Activated CD8-positive, alpha-beta T cell treated with anti-CD3 and anti-CD28 coated beads for 36 hours (primary cell): ENCODE measurements at regions of chr11 and their contacts with region 1.

Region 1: GRCh38 chr11:78139422-78140391 is at the start of gene ALG8:
- DNase-seq: peak; percentile 97
- ATAC-seq: peak; percentile 96
- H3K4me3 Mint-ChIP-seq: peak within 1 kb of the TSS; percentile 96
- H3K27ac Mint-ChIP-seq: peak within 1 kb of the TSS; percentile 92
- H3K4me1 Mint-ChIP-seq: peaks cover 37% of the 10 kb centered on the region
- H3K27me3 Mint-ChIP-seq: no peaks in the 10 kb centered on the region
- CTCF ChIP-seq: no peak
- total RNA-seq, gene ALG8: 45.5 to 47.7 TPM

Region 2: DNA sequence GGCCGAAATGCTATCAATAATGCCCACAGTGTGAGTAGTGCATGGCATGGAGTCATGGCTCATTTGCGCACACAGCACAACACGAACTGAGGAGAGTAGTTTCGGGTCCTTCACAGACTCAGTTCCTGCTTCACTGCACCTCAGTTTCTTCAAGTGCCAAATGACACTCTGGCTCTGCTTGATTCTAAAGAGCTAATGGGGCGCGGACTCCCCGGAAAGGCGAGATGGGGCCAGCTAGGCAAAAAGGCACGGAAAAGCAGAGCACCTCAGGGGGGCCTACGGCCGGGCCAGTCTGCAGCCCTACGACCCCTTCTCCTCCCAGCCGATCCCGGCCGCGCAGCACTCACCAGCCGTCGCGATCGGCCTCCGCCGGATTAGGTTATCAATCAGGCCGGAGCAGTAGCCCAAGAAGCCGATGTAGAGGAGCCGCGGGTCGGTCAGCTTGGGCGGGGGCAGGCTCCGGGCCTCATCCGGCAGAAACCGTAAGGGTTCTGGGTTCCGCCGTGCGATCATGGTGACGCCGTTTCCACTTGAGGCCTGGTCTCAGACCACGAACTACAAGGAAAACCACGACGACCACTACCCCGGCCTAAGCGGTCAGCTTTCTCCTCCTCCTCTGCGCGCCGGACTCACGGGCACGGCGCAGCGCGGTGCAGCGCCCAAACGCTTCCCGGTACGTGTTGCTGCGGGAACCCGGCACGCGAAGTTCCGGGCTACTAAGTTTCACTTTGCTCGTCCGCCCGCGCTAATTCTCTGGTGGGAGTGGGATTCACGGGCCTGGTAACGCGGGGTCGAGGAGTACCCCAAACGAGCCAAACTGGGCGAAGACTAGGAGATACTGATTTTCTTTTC is 60.2 kb before region 1 on chr11 and contains the start of gene NDUFC2:
- CTCF ChIA-PET with region 1: no interaction called
- POLR2A ChIA-PET with region 1: interaction called, 15 read pairs
- intact Hi-C with region 1: no loop called
- DNase-seq: peak; percentile 75
- ATAC-seq: peak; percentile 78
- H3K4me3 Mint-ChIP-seq: peak within 1 kb of the TSS; percentile 91
- H3K27ac Mint-ChIP-seq: peak within 1 kb of the TSS; percentile 88
- H3K4me1 Mint-ChIP-seq: peaks cover 42% of the 10 kb centered on the region
- H3K27me3 Mint-ChIP-seq: no peaks in the 10 kb centered on the region
- CTCF ChIP-seq: no peak
- total RNA-seq, gene NDUFC2: 169 to 179 TPM

Region 3: GRCh38 chr11:78188286-78189173 is 48.8 kb after region 1 on chr11 and contains the starts of genes KCTD21 and USP35:
- CTCF ChIA-PET with region 1: interaction called, 4 read pairs
- POLR2A ChIA-PET with region 1: interaction called, 4 read pairs
- intact Hi-C with region 1: loop called (anchors 5 kb)
- DNase-seq: peak; percentile 96
- ATAC-seq: peak; percentile 82
- H3K4me3 Mint-ChIP-seq: peak within 1 kb of the TSS; percentile 95
- H3K27ac Mint-ChIP-seq: peak within 1 kb of the TSS; percentile 99
- H3K4me1 Mint-ChIP-seq: peaks cover 50% of the 10 kb centered on the region
- H3K27me3 Mint-ChIP-seq: no peaks in the 10 kb centered on the region
- CTCF ChIP-seq: no peak
- total RNA-seq, gene KCTD21: 4.1 to 5.2 TPM
- total RNA-seq, gene USP35: 6.8 to 7.7 TPM

Region 4: DNA sequence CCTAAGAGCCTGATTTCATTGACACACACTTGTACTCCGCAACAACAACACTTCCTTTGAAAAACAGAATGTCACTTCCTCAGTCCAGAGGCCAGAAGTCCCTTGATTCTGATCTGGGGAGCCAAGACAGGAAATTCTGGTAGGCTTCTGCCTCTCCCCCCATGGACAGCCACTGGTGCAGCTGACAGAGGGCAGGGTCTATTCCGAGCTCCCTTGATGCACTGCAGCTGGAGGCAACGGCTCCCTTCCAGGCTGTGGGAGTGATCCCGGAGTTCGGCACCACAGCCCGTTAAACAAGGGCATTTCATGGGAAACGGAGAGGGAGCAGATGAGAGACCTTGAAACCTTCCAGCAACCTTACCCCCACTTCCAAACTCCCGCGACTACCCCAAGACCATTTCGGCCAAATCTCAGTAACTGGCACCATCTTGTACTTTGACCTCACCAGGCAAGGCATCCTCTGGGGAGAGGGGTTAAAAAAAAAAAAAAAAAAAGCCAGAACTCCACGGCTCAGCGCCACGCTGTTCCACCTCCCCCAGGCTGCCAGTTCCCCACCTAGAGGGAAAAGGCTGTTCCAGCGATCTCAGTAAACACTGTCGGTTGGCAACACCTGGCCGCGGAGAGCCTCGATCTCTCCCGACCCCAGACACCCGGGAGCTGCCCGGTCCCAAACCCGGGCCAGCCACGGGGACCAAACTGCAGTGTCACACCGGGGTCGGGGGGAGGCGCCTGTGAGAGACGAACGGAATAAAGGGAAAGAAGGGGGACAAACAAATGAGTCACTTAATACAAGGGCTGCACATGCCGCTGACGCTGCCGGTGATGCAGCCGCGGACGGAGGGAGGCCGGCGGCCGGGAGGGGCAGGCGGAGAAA is 276.8 kb after region 1 on chr11:
- CTCF ChIA-PET with region 1: interaction called, 14 read pairs
- POLR2A ChIA-PET with region 1: no interaction called
- intact Hi-C with region 1: no loop called
- DNase-seq: peak; percentile 86
- ATAC-seq: peak; percentile 76
- H3K4me3 Mint-ChIP-seq: peak overlapping the region; percentile 71
- H3K27ac Mint-ChIP-seq: peak overlapping the region; percentile 37
- H3K4me1 Mint-ChIP-seq: peaks cover 26% of the 10 kb centered on the region
- H3K27me3 Mint-ChIP-seq: peaks cover 29% of the 10 kb centered on the region
- CTCF ChIP-seq: peak; percentile 69